HepG2 (cell line): ENCODE measurements at regions of chr17 and their contacts with region 1.

Region 1: DNA sequence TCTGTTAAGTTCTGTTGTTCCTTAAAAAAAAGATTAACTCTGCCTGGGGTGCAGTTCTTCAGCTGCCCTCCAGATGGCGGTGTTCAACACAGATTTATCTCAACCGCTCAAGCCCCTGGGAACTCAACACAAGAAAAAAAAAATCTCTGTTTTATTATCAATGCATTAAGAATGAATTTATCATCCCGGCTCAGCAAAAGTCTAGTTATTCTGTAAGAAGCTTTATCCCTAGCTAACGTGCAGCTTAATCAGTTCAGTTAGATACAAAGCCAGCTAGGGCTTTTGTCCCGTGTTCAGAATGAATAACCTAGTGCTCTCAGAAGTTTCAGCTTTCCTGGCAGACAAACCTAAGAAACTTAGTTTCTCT is 475.9 kb upstream of the CCL2 start:
- DNase-seq: peak; percentile 33
- ATAC-seq: 0 out of 3 replicates have a peak, but pooled peaks have one; percentile 31
- H3K4me3 ChIP-seq: no peak overlapping the region
- H3K27ac ChIP-seq: no peak overlapping the region
- H3K4me1 ChIP-seq: no peaks in the 10 kb centered on the region
- H3K27me3 ChIP-seq: peaks cover 0 to 3% of the 10 kb centered on the region in 2 experiments; a peak in 1 of 5 replicates
- CTCF ChIP-seq: peak; percentile 66
- EP300 ChIP-seq: no peak
- POLR2A ChIP-seq: no peak
- RAD21 ChIP-seq: no peak

Region 2: DNA sequence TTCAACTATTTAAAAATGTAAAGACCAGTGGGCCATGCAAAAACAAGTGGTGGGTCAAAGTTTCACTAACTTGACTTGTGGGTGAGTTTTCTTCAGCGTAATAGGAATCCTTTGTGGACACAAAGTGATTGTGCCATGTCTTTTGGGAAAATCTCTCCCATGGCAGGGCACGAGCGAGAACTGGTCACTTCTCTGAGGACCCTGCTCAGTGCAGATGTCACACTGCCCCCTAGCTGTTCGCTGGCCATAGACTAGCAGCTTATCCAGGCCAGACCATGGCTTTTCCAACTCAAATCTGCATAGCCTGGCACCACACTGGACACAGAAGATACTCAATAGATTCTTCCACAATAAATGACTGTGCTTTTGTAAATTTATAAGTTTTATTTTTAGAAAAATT is 169.9 kb after region 1 on chr17:
- CTCF ChIA-PET with region 1: no interaction called
- POLR2A ChIA-PET with region 1: no interaction called
- in situ Hi-C with region 1: loop called (anchors 10 kb)
- intact Hi-C with region 1: no loop called
- DNase-seq: no peak
- ATAC-seq: peak; percentile 78
- H3K4me3 ChIP-seq: no peak overlapping the region
- H3K27ac ChIP-seq: no peak overlapping the region
- H3K4me1 ChIP-seq: no peaks in the 10 kb centered on the region
- H3K27me3 ChIP-seq: no peaks in the 10 kb centered on the region
- CTCF ChIP-seq: peak; percentile 46
- EP300 ChIP-seq: no peak
- POLR2A ChIP-seq: no peak
- RAD21 ChIP-seq: no peak

Region 3: DNA sequence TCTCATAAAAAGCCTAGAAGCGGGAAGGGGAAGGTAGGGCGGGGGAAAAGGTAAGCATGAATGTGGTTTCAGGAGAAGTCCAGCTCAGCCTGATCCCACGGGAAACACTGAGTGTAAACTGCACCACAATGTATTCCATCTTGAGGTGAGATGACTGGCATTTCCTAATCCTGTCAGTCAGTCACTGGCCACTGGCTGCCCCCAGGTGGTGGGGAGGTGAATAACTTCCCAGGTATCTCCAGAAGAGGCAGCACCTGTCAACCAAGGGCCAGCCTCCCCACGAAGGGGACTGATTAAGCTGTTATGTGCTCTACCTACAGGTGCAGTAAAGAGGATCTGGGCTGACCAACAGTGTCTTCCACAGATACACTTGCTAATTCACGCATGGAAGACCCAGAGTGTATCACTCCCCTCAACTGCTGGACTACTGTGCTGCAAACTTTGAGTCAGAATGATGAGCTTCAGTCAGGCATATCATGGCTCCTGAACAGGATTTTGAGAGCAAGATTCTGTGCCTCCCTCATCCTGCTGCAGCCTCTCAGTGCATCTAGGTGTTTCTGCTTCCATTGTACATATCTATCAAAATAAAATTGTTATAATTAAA is 367.3 kb after region 1 on chr17:
- CTCF ChIA-PET with region 1: interaction called, 25 read pairs
- POLR2A ChIA-PET with region 1: no interaction called
- in situ Hi-C with region 1: loop called (anchors 5 kb)
- intact Hi-C with region 1: no loop called
- DNase-seq: peak; percentile 43
- ATAC-seq: peak; percentile 89
- H3K4me3 ChIP-seq: no peak overlapping the region
- H3K27ac ChIP-seq: no peak overlapping the region
- H3K4me1 ChIP-seq: no peaks in the 10 kb centered on the region
- H3K27me3 ChIP-seq: no peaks in the 10 kb centered on the region
- CTCF ChIP-seq: peak; percentile 83
- EP300 ChIP-seq: no peak
- POLR2A ChIP-seq: no peak
- RAD21 ChIP-seq: peak; percentile 48